ENCODE measurements at regions of chr2 and their contacts with region 1.

Region 1: GRCh38 chr2:10122386-10123280 is at the start of gene RRM2:
- H3K4me3 Mint-ChIP-seq: peak within 1 kb of the TSS; percentile 79
- H3K27ac Mint-ChIP-seq: no peak within 1 kb of the TSS
- H3K4me1 Mint-ChIP-seq: peaks cover 46% of the 10 kb centered on the region
- H3K27me3 Mint-ChIP-seq: peaks cover 8% of the 10 kb centered on the region

Region 2: GRCh38 chr2:10285556-10286198 is 163.0 kb after region 1 on chr2:
- intact Hi-C with region 1: loop called (anchors 1 kb)
- H3K4me3 Mint-ChIP-seq: peak overlapping the region; percentile 44
- H3K27ac Mint-ChIP-seq: peak overlapping the region; percentile 92
- H3K4me1 Mint-ChIP-seq: peaks cover 93% of the 10 kb centered on the region
- H3K27me3 Mint-ChIP-seq: no peaks in the 10 kb centered on the region

Region 3: DNA sequence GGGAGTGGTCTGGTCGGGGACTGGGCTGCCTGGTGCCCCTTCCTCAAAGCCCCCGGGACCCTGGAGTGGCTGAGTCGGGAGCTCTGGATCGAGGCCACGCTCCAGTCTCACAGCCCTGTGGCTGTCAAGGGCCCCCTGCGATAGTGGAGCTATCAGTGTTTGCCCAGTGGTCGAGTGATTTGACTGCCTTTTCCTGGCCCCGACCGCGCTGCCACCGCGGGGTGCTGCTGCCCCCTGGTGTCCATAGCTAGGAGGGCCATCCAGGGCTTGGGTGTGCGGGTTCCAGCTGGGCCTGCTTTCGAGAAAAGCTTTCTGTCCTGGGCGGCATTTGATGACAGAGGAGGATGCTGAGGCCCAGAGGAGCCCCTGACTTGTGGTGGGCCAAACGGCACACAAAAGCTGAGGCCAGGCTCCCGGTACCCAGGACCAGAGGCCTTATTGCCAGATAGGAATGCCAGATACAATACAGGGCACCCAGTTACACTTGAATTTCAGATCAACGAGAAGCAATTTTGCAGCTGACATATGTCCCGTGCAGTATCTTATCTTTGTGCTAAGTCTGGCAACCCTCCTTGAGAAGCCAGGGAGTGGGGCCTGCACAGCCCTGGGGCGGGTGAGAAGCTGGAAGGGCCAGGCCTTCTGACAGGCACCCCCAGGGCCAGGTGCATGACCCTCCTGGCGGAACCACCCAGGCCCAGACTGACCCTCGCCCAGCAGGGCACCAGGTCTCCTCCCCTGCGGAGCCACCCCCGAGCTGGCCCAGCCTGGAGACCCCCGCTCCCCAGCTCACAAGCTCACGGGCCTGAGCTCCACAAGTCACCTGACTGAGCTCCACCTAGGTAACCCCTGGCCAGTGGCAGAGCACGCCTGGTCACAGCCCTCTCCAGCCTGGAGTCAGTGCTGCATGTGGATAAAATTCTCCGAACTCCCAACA is 312.5 kb after region 1 on chr2:
- intact Hi-C with region 1: loop called (anchors 1 kb)
- H3K4me3 Mint-ChIP-seq: no peak overlapping the region
- H3K27ac Mint-ChIP-seq: no peak overlapping the region
- H3K4me1 Mint-ChIP-seq: peaks cover 29% of the 10 kb centered on the region
- H3K27me3 Mint-ChIP-seq: peaks cover 14% of the 10 kb centered on the region

Region 4: GRCh38 chr2:10668402-10669012 is 545.9 kb after region 1 on chr2:
- intact Hi-C with region 1: loop called (anchors 5 kb)
- H3K4me3 Mint-ChIP-seq: no peak overlapping the region
- H3K27ac Mint-ChIP-seq: no peak overlapping the region
- H3K4me1 Mint-ChIP-seq: no peaks in the 10 kb centered on the region
- H3K27me3 Mint-ChIP-seq: no peaks in the 10 kb centered on the region

Region 5: DNA sequence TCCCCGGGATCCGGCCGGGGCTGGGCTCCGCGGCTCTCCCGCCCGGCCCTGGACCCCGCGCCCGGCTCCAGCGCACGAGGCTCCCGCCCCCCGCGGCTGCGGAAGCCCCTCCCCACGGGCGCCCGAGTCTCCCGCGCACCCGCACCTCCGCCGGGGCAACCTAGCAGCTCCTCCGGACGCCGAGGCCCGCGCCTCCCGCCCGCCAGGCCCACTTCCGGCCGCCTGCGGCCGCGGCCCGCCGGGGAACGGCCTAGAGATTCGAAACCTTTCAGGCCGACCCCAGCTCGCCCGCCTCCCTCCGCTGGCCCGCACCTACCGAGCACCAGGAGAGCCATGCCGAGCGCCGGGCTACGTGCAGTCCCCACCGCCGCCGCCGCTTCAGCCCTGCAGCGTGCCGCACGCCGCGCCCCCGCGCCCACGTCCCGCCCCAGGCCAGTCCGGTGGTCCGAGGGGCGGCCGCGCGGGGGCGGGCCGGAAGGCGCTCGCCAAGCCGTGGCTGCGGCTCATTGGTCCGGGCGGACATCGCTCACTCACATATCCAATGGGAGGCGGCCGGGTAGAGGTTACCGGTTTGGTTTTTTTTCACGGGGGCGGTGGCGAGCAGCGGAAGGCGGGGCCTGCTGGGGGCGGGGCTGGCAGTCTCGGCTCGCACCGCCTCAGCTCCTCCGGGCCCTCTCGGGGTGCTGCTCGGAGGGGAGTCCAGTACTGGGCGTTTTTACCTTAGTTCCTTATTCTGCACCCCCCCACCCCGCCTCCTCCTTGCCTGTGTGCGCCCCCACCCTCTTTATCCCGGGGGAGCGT is 689.9 kb after region 1 on chr2 and contains the start of gene PDIA6:
- intact Hi-C with region 1: loop called (anchors 10 kb)
- H3K4me3 Mint-ChIP-seq: peak within 1 kb of the TSS; percentile 89
- H3K27ac Mint-ChIP-seq: peak within 1 kb of the TSS; percentile 91
- H3K4me1 Mint-ChIP-seq: peaks cover 54% of the 10 kb centered on the region
- H3K27me3 Mint-ChIP-seq: peaks cover 14% of the 10 kb centered on the region

Region 6: GRCh38 chr2:11477994-11478393 is 1355.4 kb after region 1 on chr2:
- intact Hi-C with region 1: no loop called
- H3K4me3 Mint-ChIP-seq: no peak overlapping the region
- H3K27ac Mint-ChIP-seq: no peak overlapping the region
- H3K4me1 Mint-ChIP-seq: peaks cover 9% of the 10 kb centered on the region
- H3K27me3 Mint-ChIP-seq: peaks cover 51% of the 10 kb centered on the region